ENCODE measurements at regions of chr2 and their contacts with region 1.

Region 1: GRCh38 chr2:7057865-7058400 is 140.7 kb downstream of the RNF144A start:
- DNase-seq: peak; percentile 48
- ATAC-seq: peak; percentile 82
- H3K4me3 ChIP-seq: no peak overlapping the region
- H3K27ac ChIP-seq: peak overlapping the region; percentile 18; the same call in 1 of the 2 replicates
- H3K4me1 ChIP-seq: peaks cover 13% of the 10 kb centered on the region
- H3K27me3 ChIP-seq: no peaks in the 10 kb centered on the region
- CTCF ChIP-seq: no peak
- EP300 ChIP-seq: peak in 1 of 2 experiments; percentile 49; a peak in 1 of 4 replicates
- POLR2A ChIP-seq: no peak
- RAD21 ChIP-seq: no peak

Region 2: GRCh38 chr2:7071154-7071553 is 13.2 kb after region 1 on chr2:
- CTCF ChIA-PET with region 1: interaction called, 9 read pairs
- POLR2A ChIA-PET with region 1: no interaction called
- RAD21 ChIA-PET with region 1: interaction called, 3 read pairs
- SMC1A ChIA-PET with region 1: interaction called, 12 read pairs
- in situ Hi-C with region 1: no loop called
- intact Hi-C with region 1: no loop called
- DNase-seq: no peak
- ATAC-seq: no peak
- H3K4me3 ChIP-seq: no peak overlapping the region
- H3K27ac ChIP-seq: no peak overlapping the region
- H3K4me1 ChIP-seq: no peaks in the 10 kb centered on the region
- H3K27me3 ChIP-seq: no peaks in the 10 kb centered on the region
- CTCF ChIP-seq: no peak
- EP300 ChIP-seq: no peak
- POLR2A ChIP-seq: no peak
- RAD21 ChIP-seq: no peak

Region 3: GRCh38 chr2:7510350-7510749 is 452.4 kb after region 1 on chr2:
- CTCF ChIA-PET with region 1: no interaction called
- POLR2A ChIA-PET with region 1: no interaction called
- RAD21 ChIA-PET with region 1: no interaction called
- SMC1A ChIA-PET with region 1: no interaction called
- in situ Hi-C with region 1: no loop called
- intact Hi-C with region 1: no loop called
- DNase-seq: no peak
- ATAC-seq: peak; percentile 61
- H3K4me3 ChIP-seq: no peak overlapping the region
- H3K27ac ChIP-seq: no peak overlapping the region
- H3K4me1 ChIP-seq: peaks cover 4% of the 10 kb centered on the region; the same call in 1 of the 2 replicates
- H3K27me3 ChIP-seq: no peaks in the 10 kb centered on the region
- CTCF ChIP-seq: peak; percentile 4 to 19 (median 17); a peak in 1 of 6 replicates
- EP300 ChIP-seq: no peak
- POLR2A ChIP-seq: no peak
- RAD21 ChIP-seq: 0 out of 2 replicates have a peak, but pooled peaks have one; percentile 13